ENCODE measurements at regions of chr11 and their contacts with region 1.

Region 1: GRCh38 chr11:111557425-111558111 is 17.0 kb downstream of the LAYN start:
- DNase-seq: no peak
- ATAC-seq: no peak
- H3K4me3 ChIP-seq: no peak overlapping the region
- H3K27ac ChIP-seq: no peak overlapping the region
- H3K4me1 ChIP-seq: peaks cover 8% of the 10 kb centered on the region
- H3K27me3 ChIP-seq: no peaks in the 10 kb centered on the region
- CTCF ChIP-seq: no peak

Region 2: GRCh38 chr11:111283945-111284481 is 273.6 kb before region 1 on chr11:
- intact Hi-C with region 1: no loop called
- DNase-seq: peak in 1 of 2 donors; percentile 85
- ATAC-seq: peak; percentile 76 to 94 (median 90)
- H3K4me3 ChIP-seq: peak overlapping the region; percentile 17
- H3K27ac ChIP-seq: peak overlapping the region; percentile 80
- H3K4me1 ChIP-seq: peaks cover 5% of the 10 kb centered on the region
- H3K27me3 ChIP-seq: no peaks in the 10 kb centered on the region
- CTCF ChIP-seq: no peak

Region 3: DNA sequence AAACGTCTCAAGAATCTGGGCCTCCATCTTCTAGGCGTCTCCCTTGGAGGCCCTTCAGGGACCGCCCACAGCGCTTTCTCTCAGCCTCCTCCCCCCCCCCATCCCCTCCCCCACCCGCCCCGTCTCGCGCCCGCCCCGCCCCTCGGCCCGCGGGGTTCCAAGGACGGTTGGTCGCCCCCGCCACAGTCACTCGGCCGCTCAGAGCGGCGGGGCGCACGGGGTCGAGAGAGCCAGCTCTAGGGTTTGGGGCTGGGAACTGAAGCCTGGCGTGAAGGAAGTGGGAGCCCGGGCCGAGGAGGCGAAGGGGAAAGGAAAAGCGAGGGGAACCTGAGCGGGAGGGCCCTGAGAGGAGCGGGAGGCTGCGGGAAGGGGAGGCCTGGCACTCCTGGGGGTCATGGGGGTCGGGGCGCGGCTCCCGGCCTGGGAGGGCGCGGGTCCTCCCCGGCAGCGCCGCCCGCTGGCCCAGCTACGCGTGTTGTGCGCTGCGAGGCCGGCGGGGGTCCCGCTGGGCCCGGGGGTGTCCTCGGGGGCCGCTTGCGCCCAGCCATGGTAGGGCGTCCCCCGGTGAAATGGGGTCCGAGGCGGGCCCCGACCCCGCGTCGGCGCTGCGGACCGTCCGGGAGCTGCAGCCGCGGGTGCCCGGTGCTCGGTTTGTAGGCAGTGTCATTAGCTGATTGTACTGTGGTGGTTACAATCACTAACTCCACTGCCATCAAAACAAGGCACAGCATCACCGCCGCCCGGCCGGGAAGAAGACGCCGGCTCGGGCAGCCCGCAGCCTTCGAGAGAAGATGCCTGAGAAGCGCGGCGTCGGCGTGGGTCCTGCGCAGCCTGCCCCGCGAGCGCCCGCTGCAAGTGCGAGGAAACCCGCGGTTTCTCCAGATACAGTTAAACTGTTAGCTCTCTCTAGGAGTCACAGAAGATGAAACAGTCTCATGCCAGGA is 45.0 kb before region 1 on chr11 and contains the start of gene BTG4:
- intact Hi-C with region 1: loop called in 1 of 2 experiments (anchors 1 kb)
- DNase-seq: peak in 1 of 2 donors; percentile 21
- ATAC-seq: peak in 3 of 4 donors; percentile 35 to 61 (median 46)
- H3K4me3 ChIP-seq: peak within 1 kb of the TSS; percentile 65
- H3K27ac ChIP-seq: no peak within 1 kb of the TSS
- H3K4me1 ChIP-seq: no peaks in the 10 kb centered on the region
- H3K27me3 ChIP-seq: peaks cover 0 to 34% (median 12%) of the 10 kb centered on the region in 3 donors
- CTCF ChIP-seq: no peak
- total RNA-seq, gene BTG4: not detected

Measured in psoas muscle (tissue), 8 donors.